Endothelial cell of umbilical vein (primary cell): ENCODE measurements at regions of chr11 and their contacts with region 1.

Region 1: DNA sequence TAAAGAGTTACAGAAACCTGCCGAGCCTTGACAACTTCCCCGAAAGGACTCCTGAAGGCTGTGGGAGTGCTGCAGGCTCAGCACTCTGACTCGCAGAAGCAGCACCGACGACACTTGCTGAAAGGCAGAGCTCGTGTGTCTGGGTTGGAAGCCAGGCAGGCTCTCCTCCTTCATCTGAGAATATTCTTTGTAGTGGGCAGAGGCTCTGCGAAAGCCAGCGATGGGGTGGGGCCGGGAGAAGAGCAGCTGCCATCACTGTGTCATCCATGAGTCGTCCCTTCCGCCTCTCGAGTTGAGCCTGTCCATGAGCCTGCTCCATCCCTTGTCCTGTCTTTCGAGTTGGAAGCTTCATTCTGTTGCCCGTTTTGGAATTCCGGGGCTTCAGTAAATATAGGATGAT is 11.9 kb downstream of the GLB1L2 start:
- DNase-seq: no peak
- H3K4me3 ChIP-seq: no peak overlapping the region
- H3K27ac ChIP-seq: no peak overlapping the region
- H3K4me1 ChIP-seq: no peaks in the 10 kb centered on the region
- H3K27me3 ChIP-seq: no peaks in the 10 kb centered on the region
- CTCF ChIP-seq: no peak
- POLR2A ChIP-seq: no peak

Region 2: GRCh38 chr11:134276396-134277182 is 67.1 kb before region 1 on chr11:
- CTCF ChIA-PET with region 1: no interaction called
- POLR2A ChIA-PET with region 1: no interaction called
- dilution Hi-C with region 1: no loop called
- intact Hi-C with region 1: loop called (anchors 1 kb)
- DNase-seq: no peak
- H3K4me3 ChIP-seq: no peak overlapping the region
- H3K27ac ChIP-seq: no peak overlapping the region
- H3K4me1 ChIP-seq: peaks cover 2% of the 10 kb centered on the region
- H3K27me3 ChIP-seq: peaks cover 54 to 73% of the 10 kb centered on the region in 2 experiments
- CTCF ChIP-seq: no peak
- POLR2A ChIP-seq: no peak

Region 3: GRCh38 chr11:134360050-134360835 is 16.6 kb after region 1 on chr11:
- CTCF ChIA-PET with region 1: no interaction called
- POLR2A ChIA-PET with region 1: no interaction called
- dilution Hi-C with region 1: no loop called
- intact Hi-C with region 1: no loop called
- DNase-seq: peak; percentile 66
- H3K4me3 ChIP-seq: no peak overlapping the region
- H3K27ac ChIP-seq: no peak overlapping the region
- H3K4me1 ChIP-seq: no peaks in the 10 kb centered on the region
- H3K27me3 ChIP-seq: no peaks in the 10 kb centered on the region
- CTCF ChIP-seq: peak; percentile 86 to 97
- POLR2A ChIP-seq: no peak